ENCODE measurements at regions of chr9 and their contacts with region 1.

Region 1: DNA sequence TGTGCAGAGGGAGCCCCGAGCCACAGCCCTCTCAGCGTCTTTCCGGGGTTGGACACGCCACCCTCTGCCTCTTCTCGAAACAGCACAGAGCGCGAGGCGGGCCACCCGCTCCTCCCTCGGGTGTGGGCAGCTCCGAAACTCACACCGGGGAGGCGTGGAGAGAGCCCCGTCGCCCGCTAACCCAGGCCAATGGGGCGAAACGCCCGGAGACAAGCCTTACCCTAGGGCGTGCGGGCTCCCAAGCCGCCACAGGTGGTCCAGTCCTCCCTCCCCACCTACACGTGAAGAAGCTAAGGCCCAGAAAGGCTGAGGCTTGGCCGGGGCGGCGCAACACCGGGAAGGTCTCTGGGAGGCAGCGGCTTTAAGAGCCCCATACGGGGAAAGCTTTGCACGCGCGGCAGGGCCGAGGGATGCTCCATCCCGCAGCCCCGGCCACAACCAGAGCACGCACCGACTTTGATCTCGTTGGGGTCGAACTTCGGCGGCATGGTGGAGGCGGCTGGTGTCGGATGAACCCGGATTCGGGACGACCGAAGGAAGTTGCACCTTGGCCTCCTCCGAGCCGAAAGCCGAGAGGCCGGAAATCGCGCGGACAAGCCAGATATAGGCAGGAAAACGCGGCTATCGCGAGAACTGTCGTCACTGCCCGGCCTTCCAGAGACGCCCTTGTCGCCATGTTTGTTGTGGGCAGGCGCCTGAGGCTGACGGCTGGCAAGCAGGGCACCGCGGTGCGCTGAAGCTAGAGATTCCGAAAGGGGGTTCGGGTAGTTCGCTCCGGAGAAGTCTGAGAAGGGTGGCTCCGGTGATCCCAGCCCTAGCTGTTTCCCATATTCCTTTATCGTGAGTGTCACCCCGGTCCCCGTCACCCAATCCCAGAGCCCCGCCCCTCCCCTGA is at the starts of genes LRSAM1 and RPL12:
- DNase-seq: peak; percentile 95 to 100 (median 98)
- ATAC-seq: peak; percentile 85
- H3K4me3 ChIP-seq: peak within 1 kb of the TSS; percentile 75
- H3K4me3 Mint-ChIP-seq: peak within 1 kb of the TSS; percentile 83 to 98 (median 94)
- H3K27ac ChIP-seq: peak within 1 kb of the TSS; percentile 86
- H3K27ac Mint-ChIP-seq: peak within 1 kb of the TSS; percentile 76 to 97 (median 94)
- H3K4me1 ChIP-seq: peaks cover 21 to 25% of the 10 kb centered on the region in 2 donors
- H3K4me1 Mint-ChIP-seq: peaks cover 21 to 45% (median 40%) of the 10 kb centered on the region in 7 donors
- H3K27me3 ChIP-seq: no peaks in the 10 kb centered on the region
- H3K27me3 Mint-ChIP-seq: no peaks in the 10 kb centered on the region
- total RNA-seq, gene LRSAM1: 15.1 to 23.3 (median 19.8) TPM
- total RNA-seq, gene RPL12: 1,005 to 1,932 (median 1,675) TPM

Region 2: DNA sequence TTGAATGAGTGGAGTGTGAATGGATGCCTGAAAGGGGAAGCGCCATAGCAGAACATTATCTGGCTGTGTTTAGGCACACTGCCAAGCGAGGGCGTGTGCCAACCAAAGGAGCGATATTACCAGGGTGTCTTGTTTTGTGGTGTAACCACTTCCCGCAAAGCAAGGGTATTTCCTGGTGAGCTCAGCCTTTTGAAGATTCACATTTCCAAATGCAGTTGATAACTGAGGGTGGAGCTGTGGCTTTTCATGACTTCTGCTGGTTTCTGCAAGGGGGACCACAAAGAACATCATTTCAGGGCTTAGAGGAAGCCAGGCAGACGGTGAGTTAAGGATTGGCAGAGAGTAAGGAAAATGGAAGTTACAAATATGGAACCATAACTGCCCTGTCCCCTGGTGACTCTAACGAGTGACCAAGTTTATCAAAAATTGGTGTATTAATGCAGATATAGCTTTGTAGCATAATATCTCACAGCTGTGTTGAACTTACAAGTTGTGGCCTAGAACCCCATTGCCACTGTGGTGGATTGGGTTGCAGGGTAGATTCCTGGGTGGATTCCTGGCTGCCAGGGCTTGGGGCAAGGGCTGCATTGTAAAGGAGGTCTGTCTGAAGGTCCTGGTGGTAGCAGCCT is 465.1 kb before region 1 on chr9:
- CTCF ChIA-PET with region 1: no interaction called
- POLR2A ChIA-PET with region 1: interaction called, 4 read pairs
- intact Hi-C with region 1: loop called in 1 of 2 experiments (anchors 5 kb)
- DNase-seq: peak; percentile 57 to 97 (median 95)
- ATAC-seq: peak; percentile 92
- H3K4me3 ChIP-seq: peak overlapping the region; percentile 5
- H3K4me3 Mint-ChIP-seq: peak overlapping the region; percentile 58 to 88 (median 76)
- H3K27ac ChIP-seq: no peak overlapping the region
- H3K27ac Mint-ChIP-seq: peak overlapping the region; percentile 44 to 91 (median 81)
- H3K4me1 ChIP-seq: peaks cover 43 to 72% of the 10 kb centered on the region in 2 donors
- H3K4me1 Mint-ChIP-seq: peaks cover 53 to 69% (median 63%) of the 10 kb centered on the region in 7 donors
- H3K27me3 ChIP-seq: peaks cover 0 to 4% of the 10 kb centered on the region in 2 donors
- H3K27me3 Mint-ChIP-seq: peaks cover 56 to 86% (median 70%) of the 10 kb centered on the region in 5 donors

Region 3: GRCh38 chr9:127244609-127245601 is 206.2 kb before region 1 on chr9:
- CTCF ChIA-PET with region 1: no interaction called
- POLR2A ChIA-PET with region 1: interaction called, 9 read pairs
- intact Hi-C with region 1: loop called (anchors 1 kb)
- DNase-seq: peak; percentile 84 to 94 (median 91)
- ATAC-seq: peak; percentile 100
- H3K4me3 ChIP-seq: peak overlapping the region; percentile 85
- H3K4me3 Mint-ChIP-seq: peak overlapping the region; percentile 80 to 92 (median 88)
- H3K27ac ChIP-seq: no peak overlapping the region
- H3K27ac Mint-ChIP-seq: peak overlapping the region in 7 of 9 donors; percentile 28 to 80 (median 59)
- H3K4me1 ChIP-seq: peaks cover 0 to 5% of the 10 kb centered on the region in 2 donors
- H3K4me1 Mint-ChIP-seq: peaks cover 4 to 16% (median 8%) of the 10 kb centered on the region in 7 donors
- H3K27me3 ChIP-seq: no peaks in the 10 kb centered on the region
- H3K27me3 Mint-ChIP-seq: peaks cover 0 to 24% (median 4%) of the 10 kb centered on the region in 5 donors

Region 4: GRCh38 chr9:127370672-127371648 is 80.1 kb before region 1 on chr9:
- CTCF ChIA-PET with region 1: no interaction called
- POLR2A ChIA-PET with region 1: no interaction called
- intact Hi-C with region 1: no loop called
- DNase-seq: peak in 1 of 9 donors; percentile 8
- ATAC-seq: no peak
- H3K4me3 ChIP-seq: no peak overlapping the region
- H3K4me3 Mint-ChIP-seq: no peak overlapping the region
- H3K27ac ChIP-seq: no peak overlapping the region
- H3K27ac Mint-ChIP-seq: no peak overlapping the region
- H3K4me1 ChIP-seq: no peaks in the 10 kb centered on the region
- H3K4me1 Mint-ChIP-seq: no peaks in the 10 kb centered on the region
- H3K27me3 ChIP-seq: peaks cover 0 to 21% of the 10 kb centered on the region in 2 donors
- H3K27me3 Mint-ChIP-seq: peaks cover 71 to 83% (median 76%) of the 10 kb centered on the region in 5 donors

Region 5: GRCh38 chr9:127396808-127397497 is 54.1 kb before region 1 on chr9 and contains the start of gene SLC2A8:
- CTCF ChIA-PET with region 1: no interaction called
- POLR2A ChIA-PET with region 1: interaction called, 4 read pairs
- intact Hi-C with region 1: loop called in 1 of 2 experiments (anchors 2 kb)
- DNase-seq: peak; percentile 33 to 87 (median 61)
- ATAC-seq: peak; percentile 97
- H3K4me3 ChIP-seq: peak within 1 kb of the TSS; percentile 22
- H3K4me3 Mint-ChIP-seq: peak within 1 kb of the TSS; percentile 50 to 82 (median 64)
- H3K27ac ChIP-seq: no peak within 1 kb of the TSS
- H3K27ac Mint-ChIP-seq: peak within 1 kb of the TSS in 2 of 9 donors; percentile 37 to 59
- H3K4me1 ChIP-seq: peaks cover 10 to 15% of the 10 kb centered on the region in 2 donors
- H3K4me1 Mint-ChIP-seq: peaks cover 11 to 25% (median 16%) of the 10 kb centered on the region in 7 donors
- H3K27me3 ChIP-seq: peaks cover 0 to 57% of the 10 kb centered on the region in 2 donors
- H3K27me3 Mint-ChIP-seq: peaks cover 51 to 80% (median 72%) of the 10 kb centered on the region in 5 donors
- total RNA-seq, gene SLC2A8: 0.27 to 4.8 (median 1.3) TPM

Region 6: GRCh38 chr9:127586537-127586936 is 135.5 kb after region 1 on chr9:
- CTCF ChIA-PET with region 1: no interaction called
- POLR2A ChIA-PET with region 1: interaction called, 3 read pairs
- intact Hi-C with region 1: loop called in 1 of 2 experiments (anchors 2 kb)
- DNase-seq: peak; percentile 24 to 60 (median 53)
- ATAC-seq: peak; percentile 79
- H3K4me3 ChIP-seq: no peak overlapping the region
- H3K4me3 Mint-ChIP-seq: no peak overlapping the region
- H3K27ac ChIP-seq: no peak overlapping the region
- H3K27ac Mint-ChIP-seq: peak overlapping the region in 1 of 9 donors; percentile 56
- H3K4me1 ChIP-seq: no peaks in the 10 kb centered on the region
- H3K4me1 Mint-ChIP-seq: peaks cover 0 to 16% (median 0%) of the 10 kb centered on the region in 7 donors
- H3K27me3 ChIP-seq: no peaks in the 10 kb centered on the region
- H3K27me3 Mint-ChIP-seq: peaks cover 0 to 22% (median 5%) of the 10 kb centered on the region in 5 donors

Region 7: DNA sequence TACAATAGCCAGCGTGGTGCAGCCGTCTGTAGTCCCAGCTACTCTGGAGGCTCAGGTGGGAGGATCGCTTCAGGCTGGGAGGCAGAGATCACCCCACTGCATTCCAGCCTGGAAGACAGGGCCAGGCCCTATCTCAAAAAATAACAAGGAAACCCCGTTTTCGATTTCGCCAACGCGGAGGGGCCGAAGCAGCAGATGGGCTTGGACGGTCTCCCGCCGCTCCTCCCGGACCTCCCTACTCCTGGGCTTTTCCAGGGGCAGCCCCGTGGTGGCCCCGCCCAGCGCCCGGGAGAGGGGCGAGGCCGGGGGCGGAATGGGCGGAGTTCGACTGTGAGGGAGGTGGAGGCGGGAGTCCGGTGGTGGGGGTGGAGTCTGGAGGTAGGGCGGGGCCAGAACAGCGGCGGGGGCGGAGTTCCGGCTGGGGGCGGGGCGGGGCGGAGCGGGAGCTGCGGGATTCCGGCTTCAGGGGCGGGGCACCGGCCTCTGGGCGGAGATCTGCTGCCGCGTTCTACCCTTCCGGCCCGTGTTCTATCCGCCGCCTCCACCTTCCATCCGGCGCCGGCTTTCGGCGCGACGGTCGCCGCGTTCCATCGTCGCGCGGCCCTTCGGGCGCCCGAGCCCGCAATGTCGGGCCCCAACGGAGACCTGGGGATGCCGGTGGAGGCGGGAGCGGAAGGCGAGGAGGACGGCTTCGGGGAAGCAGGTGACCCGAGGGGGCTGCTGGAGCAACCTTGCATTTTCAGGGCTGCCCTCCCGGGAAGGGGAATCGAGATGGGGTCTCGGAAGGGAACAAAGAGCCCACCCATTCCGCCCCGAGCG is 708.9 kb after region 1 on chr9 and contains the start of gene BBLN:
- CTCF ChIA-PET with region 1: no interaction called
- POLR2A ChIA-PET with region 1: no interaction called
- intact Hi-C with region 1: loop called in 1 of 2 experiments (anchors 2 kb)
- DNase-seq: peak; percentile 78 to 94 (median 87)
- ATAC-seq: peak; percentile 94
- H3K4me3 ChIP-seq: peak within 1 kb of the TSS; percentile 97
- H3K4me3 Mint-ChIP-seq: peak within 1 kb of the TSS; percentile 79 to 90 (median 82)
- H3K27ac ChIP-seq: peak within 1 kb of the TSS; percentile 78
- H3K27ac Mint-ChIP-seq: peak within 1 kb of the TSS; percentile 84 to 95 (median 93)
- H3K4me1 ChIP-seq: peaks cover 11 to 12% of the 10 kb centered on the region in 2 donors
- H3K4me1 Mint-ChIP-seq: peaks cover 0 to 28% (median 21%) of the 10 kb centered on the region in 7 donors
- H3K27me3 ChIP-seq: no peaks in the 10 kb centered on the region
- H3K27me3 Mint-ChIP-seq: no peaks in the 10 kb centered on the region
- total RNA-seq, gene BBLN: 42.7 to 87.8 (median 48.0) TPM

Measured in naive thymus-derived CD4-positive, alpha-beta T cell (primary cell).